ENCODE measurements at regions of chr18 and their contacts with region 1.

Region 1: GRCh38 chr18:59823596-59824195 is 76.1 kb upstream of the PMAIP1 start:
- DNase-seq: peak; percentile 77
- ATAC-seq: no peak
- H3K4me3 Mint-ChIP-seq: no peak overlapping the region
- H3K27ac Mint-ChIP-seq: no peak overlapping the region
- H3K4me1 Mint-ChIP-seq: peaks cover 4% of the 10 kb centered on the region
- H3K27me3 Mint-ChIP-seq: peaks cover 15% of the 10 kb centered on the region

Region 2: GRCh38 chr18:59459369-59460079 is 364.2 kb before region 1 on chr18:
- CTCF ChIA-PET with region 1: interaction called, 28 read pairs
- DNase-seq: no peak
- ATAC-seq: no peak
- H3K4me3 Mint-ChIP-seq: no peak overlapping the region
- H3K27ac Mint-ChIP-seq: no peak overlapping the region
- H3K4me1 Mint-ChIP-seq: peaks cover 2% of the 10 kb centered on the region
- H3K27me3 Mint-ChIP-seq: peaks cover 13% of the 10 kb centered on the region

Region 3: DNA sequence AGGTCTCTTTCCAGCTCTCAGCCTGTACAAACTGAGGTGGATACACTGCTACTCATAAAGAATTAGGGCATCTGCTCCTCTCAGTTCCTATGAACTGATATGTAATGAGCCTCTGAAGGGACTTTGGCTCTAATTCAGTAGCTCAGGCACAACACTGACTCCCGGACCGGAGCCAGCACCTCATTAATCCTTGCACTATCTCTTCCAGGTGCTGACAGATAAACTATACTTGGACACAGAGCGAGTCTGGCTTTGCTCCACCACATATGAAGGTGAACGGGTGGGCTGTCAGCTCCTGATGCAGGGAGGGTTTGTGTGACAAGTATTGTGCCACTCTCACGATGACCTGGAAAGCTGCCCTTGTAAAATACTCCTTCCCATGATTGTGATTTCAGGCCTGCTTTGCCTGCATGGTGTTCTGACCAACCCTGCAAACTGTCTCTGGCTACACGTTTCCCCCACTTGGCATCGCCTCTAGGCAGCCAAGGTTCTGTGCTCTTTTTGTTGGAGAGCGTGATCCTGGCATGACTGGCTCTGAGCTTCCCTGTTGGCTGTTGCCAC is 353.1 kb before region 1 on chr18:
- CTCF ChIA-PET with region 1: no interaction called
- DNase-seq: no peak
- ATAC-seq: no peak
- H3K4me3 Mint-ChIP-seq: no peak overlapping the region
- H3K27ac Mint-ChIP-seq: no peak overlapping the region
- H3K4me1 Mint-ChIP-seq: no peaks in the 10 kb centered on the region
- H3K27me3 Mint-ChIP-seq: peaks cover 4% of the 10 kb centered on the region

Region 4: GRCh38 chr18:59697236-59697932 is 126.3 kb before region 1 on chr18 and contains the start of gene CCBE1:
- CTCF ChIA-PET with region 1: interaction called, 42 read pairs
- DNase-seq: peak; percentile 52
- ATAC-seq: peak; percentile 66
- H3K4me3 Mint-ChIP-seq: no peak within 1 kb of the TSS
- H3K27ac Mint-ChIP-seq: no peak within 1 kb of the TSS
- H3K4me1 Mint-ChIP-seq: peaks cover 12% of the 10 kb centered on the region
- H3K27me3 Mint-ChIP-seq: peaks cover 63% of the 10 kb centered on the region
- total RNA-seq, gene CCBE1: 0.12 TPM in 1 of 2 experiments, not detected in the other

Region 5: DNA sequence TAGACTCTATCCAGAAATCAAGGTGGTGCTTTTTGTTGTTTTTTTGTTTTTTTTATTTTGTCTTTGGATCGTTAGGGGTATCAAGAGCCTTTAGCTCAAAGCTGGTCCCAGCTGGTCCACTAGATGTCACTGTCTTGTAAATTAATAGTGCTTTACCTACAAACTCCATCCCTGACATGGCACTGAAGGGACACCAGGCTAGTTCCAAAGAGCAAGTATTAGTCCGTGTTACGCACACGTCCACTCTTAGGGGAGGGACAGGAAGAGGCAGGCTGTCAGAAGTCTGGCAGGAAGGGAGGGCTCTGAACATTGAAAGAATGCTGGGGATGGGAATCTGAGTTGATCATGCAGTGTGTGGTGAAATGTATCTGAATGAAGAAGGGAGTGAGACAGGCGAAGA is 40.6 kb before region 1 on chr18:
- CTCF ChIA-PET with region 1: interaction called, 112 read pairs
- DNase-seq: peak; percentile 51
- ATAC-seq: peak; percentile 47
- H3K4me3 Mint-ChIP-seq: no peak overlapping the region
- H3K27ac Mint-ChIP-seq: no peak overlapping the region
- H3K4me1 Mint-ChIP-seq: peaks cover 2% of the 10 kb centered on the region
- H3K27me3 Mint-ChIP-seq: peaks cover 15% of the 10 kb centered on the region

Region 6: GRCh38 chr18:59802031-59802430 is 21.7 kb before region 1 on chr18:
- CTCF ChIA-PET with region 1: interaction called, 25 read pairs
- DNase-seq: peak; percentile 55
- ATAC-seq: peak; percentile 87
- H3K4me3 Mint-ChIP-seq: no peak overlapping the region
- H3K27ac Mint-ChIP-seq: peak overlapping the region; percentile 66
- H3K4me1 Mint-ChIP-seq: peaks cover 21% of the 10 kb centered on the region
- H3K27me3 Mint-ChIP-seq: peaks cover 8% of the 10 kb centered on the region

Region 7: DNA sequence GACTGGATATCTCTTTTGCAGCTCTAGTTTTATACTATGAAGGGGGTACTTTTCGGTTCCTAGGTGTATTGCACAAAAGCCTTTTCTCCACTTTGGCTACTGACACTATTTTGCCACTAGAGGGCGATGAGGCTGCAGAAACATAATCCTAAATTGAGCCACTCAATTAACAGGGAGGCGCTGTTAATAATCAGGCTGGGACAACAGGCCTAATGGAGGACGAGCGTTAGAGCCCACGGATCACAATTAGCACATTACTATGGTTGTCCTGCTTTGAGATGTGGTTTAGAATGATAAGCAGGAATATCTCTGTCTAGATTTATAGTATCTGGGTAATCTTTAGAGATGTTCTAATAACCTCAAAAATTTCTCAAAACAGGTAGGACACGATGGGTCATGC is 13.9 kb after region 1 on chr18:
- CTCF ChIA-PET with region 1: interaction called, 16 read pairs
- DNase-seq: peak; percentile 65
- ATAC-seq: peak; percentile 67
- H3K4me3 Mint-ChIP-seq: no peak overlapping the region
- H3K27ac Mint-ChIP-seq: no peak overlapping the region
- H3K4me1 Mint-ChIP-seq: peaks cover 16% of the 10 kb centered on the region
- H3K27me3 Mint-ChIP-seq: peaks cover 11% of the 10 kb centered on the region